A673 (cell line): ENCODE measurements at regions of chr14 and their contacts with region 1.

Region 1: DNA sequence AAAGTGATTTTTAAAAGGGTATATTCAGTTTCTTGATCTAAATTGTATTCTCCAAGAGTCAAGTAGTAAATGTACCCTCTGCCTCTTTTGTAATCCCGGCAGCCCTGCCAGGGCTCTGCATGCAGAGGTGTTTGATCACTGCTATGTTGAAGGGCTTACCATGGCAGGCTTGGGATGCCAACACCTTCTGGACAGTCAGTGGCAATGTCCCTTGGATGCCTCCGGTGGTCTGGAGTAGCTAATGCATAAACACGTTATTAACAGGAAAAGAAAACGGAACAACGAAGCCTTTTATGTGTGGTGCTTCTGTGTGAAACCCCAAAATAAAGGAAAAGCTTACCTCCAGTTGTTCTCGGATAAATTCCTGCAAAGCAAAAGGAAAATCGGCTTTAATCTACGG is 19.9 kb downstream of the EIF2B2 start:
- DNase-seq: peak; percentile 39
- H3K4me3 ChIP-seq: no peak overlapping the region
- H3K27ac ChIP-seq: no peak overlapping the region
- H3K4me1 ChIP-seq: peaks cover 5% of the 10 kb centered on the region
- H3K27me3 ChIP-seq: no peaks in the 10 kb centered on the region
- CTCF ChIP-seq: peak; percentile 52

Region 2: GRCh38 chr14:73285979-73286378 is 1736.7 kb before region 1 on chr14:
- CTCF ChIA-PET with region 1: no interaction called
- POLR2A ChIA-PET with region 1: interaction called, 28 read pairs
- intact Hi-C with region 1: no loop called
- DNase-seq: no peak
- H3K4me3 ChIP-seq: no peak overlapping the region
- H3K27ac ChIP-seq: no peak overlapping the region
- H3K4me1 ChIP-seq: no peaks in the 10 kb centered on the region
- H3K27me3 ChIP-seq: no peaks in the 10 kb centered on the region
- CTCF ChIP-seq: no peak

Region 3: DNA sequence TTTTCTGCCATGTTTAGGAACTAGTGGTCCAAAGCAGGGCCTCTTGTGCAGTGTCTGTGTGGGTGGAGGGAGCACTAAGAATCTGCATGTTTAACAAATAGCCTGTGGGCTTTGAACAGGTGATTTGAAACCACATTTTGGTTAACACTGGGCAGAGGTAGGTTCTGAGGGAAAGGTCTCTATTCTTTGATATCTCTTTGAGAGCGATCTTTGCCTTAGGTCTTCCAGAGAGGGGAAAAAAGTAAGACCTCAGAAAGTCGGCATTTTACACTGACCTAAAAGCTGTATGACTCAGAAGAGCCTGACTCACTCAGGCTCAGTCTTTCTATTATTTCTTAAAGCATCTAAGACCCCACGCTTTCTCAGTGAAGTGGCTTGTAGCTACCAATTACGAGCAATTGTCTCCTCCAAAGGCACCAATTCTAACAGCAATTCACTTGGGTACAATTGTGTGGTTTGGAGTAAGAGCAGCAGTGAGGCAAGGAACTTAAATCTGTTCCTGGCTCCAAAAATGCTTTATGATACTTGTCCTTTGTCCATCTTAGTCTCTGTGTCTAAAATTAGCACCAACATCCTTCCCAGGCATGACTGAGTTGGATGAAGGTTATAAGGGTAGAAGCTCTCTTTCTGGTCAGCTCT is 11.2 kb before region 1 on chr14:
- CTCF ChIA-PET with region 1: no interaction called
- POLR2A ChIA-PET with region 1: interaction called, 10 read pairs
- intact Hi-C with region 1: no loop called
- DNase-seq: peak; percentile 67
- H3K4me3 ChIP-seq: no peak overlapping the region
- H3K27ac ChIP-seq: no peak overlapping the region
- H3K4me1 ChIP-seq: peaks cover 30% of the 10 kb centered on the region
- H3K27me3 ChIP-seq: no peaks in the 10 kb centered on the region
- CTCF ChIP-seq: no peak

Region 4: DNA sequence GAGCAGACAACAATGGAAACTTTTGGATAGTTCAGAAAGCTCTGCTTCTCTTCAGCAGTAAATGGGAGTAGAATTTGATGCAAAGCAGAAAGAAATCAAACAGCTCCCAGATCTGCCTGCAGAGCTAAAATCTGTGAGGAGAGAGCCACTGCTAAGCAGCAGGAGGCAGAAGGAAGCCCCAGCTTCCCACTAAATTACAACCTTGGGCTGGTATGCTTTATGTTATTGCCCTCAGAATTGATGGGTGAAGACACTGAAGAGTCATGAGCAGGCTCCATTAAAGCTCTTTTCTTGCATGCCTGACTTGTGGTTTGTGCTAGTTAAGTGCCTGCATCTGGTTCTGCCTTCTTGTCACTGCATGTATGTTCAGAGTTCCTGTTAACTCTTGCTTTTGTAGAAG is 55.1 kb after region 1 on chr14:
- CTCF ChIA-PET with region 1: no interaction called
- POLR2A ChIA-PET with region 1: no interaction called
- intact Hi-C with region 1: no loop called
- DNase-seq: no peak
- H3K4me3 ChIP-seq: no peak overlapping the region
- H3K27ac ChIP-seq: no peak overlapping the region
- H3K4me1 ChIP-seq: no peaks in the 10 kb centered on the region
- H3K27me3 ChIP-seq: no peaks in the 10 kb centered on the region
- CTCF ChIP-seq: no peak